ENCODE measurements at regions of chr3 and their contacts with region 1.

Region 1: GRCh38 chr3:189292667-189293478 is 121.1 kb downstream of the TPRG1 start:
- DNase-seq: no peak
- H3K4me3 ChIP-seq: no peak overlapping the region
- H3K27ac ChIP-seq: no peak overlapping the region
- H3K27me3 ChIP-seq: no peaks in the 10 kb centered on the region
- CTCF ChIP-seq: no peak

Region 2: GRCh38 chr3:187719628-187720336 is 1573.1 kb before region 1 on chr3:
- CTCF ChIA-PET with region 1: interaction called, 12 read pairs
- POLR2A ChIA-PET with region 1: no interaction called
- DNase-seq: no peak
- H3K4me3 ChIP-seq: no peak overlapping the region
- H3K27ac ChIP-seq: no peak overlapping the region
- H3K27me3 ChIP-seq: peaks cover 7% of the 10 kb centered on the region
- CTCF ChIP-seq: no peak

Region 3: DNA sequence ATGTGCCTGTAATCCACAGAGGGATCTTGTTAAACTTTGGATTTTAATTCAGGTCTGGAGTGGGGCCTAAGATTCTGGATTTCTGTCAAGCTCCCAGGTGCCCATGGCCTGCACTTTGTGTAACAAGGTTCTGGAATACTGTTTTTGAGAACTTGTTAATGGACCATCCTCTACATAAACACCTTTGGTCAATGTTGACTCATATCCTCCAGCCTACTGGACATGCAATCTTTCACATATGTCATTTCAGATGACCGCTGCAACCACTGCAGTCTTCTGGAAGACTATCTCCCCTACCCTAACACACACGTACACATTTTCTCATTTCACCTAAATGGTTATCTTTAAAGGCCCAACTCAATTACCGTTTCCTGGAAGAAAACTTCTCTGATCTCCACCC is 423.2 kb before region 1 on chr3:
- CTCF ChIA-PET with region 1: no interaction called
- POLR2A ChIA-PET with region 1: no interaction called
- DNase-seq: no peak
- H3K4me3 ChIP-seq: no peak overlapping the region
- H3K27ac ChIP-seq: no peak overlapping the region
- H3K27me3 ChIP-seq: no peaks in the 10 kb centered on the region
- CTCF ChIP-seq: no peak

Region 4: DNA sequence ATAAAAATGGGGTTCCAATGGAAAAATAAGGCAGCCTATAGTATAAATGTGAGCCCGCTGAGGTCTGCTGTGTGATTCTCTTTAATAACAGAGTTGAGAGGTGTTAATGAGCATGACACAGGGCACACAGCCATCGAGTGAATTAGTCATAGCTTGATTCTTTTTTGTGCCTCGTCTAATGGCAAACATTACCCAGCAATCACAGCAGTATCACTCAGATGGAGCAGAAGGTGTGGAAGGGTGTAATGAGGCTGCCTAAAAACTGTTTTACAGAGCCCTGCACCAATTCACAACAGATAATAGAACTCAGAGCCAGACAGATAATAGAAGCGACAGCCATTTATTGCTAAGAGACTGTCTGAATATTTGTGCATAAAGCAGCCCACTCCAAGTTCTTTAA is 299.7 kb before region 1 on chr3:
- CTCF ChIA-PET with region 1: no interaction called
- POLR2A ChIA-PET with region 1: no interaction called
- DNase-seq: no peak
- H3K4me3 ChIP-seq: no peak overlapping the region
- H3K27ac ChIP-seq: no peak overlapping the region
- H3K27me3 ChIP-seq: no peaks in the 10 kb centered on the region
- CTCF ChIP-seq: no peak

Region 5: DNA sequence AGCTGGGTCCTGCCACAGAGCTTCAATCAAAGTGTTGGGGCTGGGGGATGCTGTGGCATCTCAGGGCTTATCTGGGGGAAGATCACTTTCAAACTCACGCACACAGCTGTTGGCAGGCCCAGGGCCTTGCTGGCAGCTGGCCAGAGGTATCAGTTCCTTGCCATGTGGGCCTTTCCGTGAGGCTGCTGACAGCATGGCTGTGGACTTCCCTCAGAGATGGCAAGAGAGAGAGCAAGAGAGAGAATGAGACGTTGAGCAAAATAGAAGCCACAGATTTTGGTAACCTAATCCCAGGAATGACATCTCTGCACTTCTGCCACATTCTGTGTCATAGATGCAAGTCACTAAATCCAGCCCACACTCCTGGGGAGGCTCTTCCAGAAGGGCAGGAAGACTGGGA is 30.1 kb before region 1 on chr3:
- CTCF ChIA-PET with region 1: no interaction called
- POLR2A ChIA-PET with region 1: no interaction called
- DNase-seq: no peak
- H3K4me3 ChIP-seq: no peak overlapping the region
- H3K27ac ChIP-seq: no peak overlapping the region
- H3K27me3 ChIP-seq: peaks cover 4% of the 10 kb centered on the region
- CTCF ChIP-seq: no peak

Measured in AG04450 (cell line).